ENCODE measurements at regions of chr6 and their contacts with region 1.

Region 1: GRCh38 chr6:143575440-143575839 is 63.9 kb upstream of the FUCA2 start:
- DNase-seq: peak; percentile 54 to 72 (median 68)
- H3K4me3 ChIP-seq: no peak overlapping the region
- H3K4me3 Mint-ChIP-seq: no peak overlapping the region
- H3K27ac ChIP-seq: no peak overlapping the region
- H3K27ac Mint-ChIP-seq: peak overlapping the region in 4 of 7 donors; percentile 22 to 43 (median 32)
- H3K4me1 ChIP-seq: no peaks in the 10 kb centered on the region
- H3K4me1 Mint-ChIP-seq: peaks cover 11 to 35% (median 19%) of the 10 kb centered on the region in 4 donors
- H3K27me3 ChIP-seq: no peaks in the 10 kb centered on the region
- H3K27me3 Mint-ChIP-seq: no peaks in the 10 kb centered on the region

Region 2: DNA sequence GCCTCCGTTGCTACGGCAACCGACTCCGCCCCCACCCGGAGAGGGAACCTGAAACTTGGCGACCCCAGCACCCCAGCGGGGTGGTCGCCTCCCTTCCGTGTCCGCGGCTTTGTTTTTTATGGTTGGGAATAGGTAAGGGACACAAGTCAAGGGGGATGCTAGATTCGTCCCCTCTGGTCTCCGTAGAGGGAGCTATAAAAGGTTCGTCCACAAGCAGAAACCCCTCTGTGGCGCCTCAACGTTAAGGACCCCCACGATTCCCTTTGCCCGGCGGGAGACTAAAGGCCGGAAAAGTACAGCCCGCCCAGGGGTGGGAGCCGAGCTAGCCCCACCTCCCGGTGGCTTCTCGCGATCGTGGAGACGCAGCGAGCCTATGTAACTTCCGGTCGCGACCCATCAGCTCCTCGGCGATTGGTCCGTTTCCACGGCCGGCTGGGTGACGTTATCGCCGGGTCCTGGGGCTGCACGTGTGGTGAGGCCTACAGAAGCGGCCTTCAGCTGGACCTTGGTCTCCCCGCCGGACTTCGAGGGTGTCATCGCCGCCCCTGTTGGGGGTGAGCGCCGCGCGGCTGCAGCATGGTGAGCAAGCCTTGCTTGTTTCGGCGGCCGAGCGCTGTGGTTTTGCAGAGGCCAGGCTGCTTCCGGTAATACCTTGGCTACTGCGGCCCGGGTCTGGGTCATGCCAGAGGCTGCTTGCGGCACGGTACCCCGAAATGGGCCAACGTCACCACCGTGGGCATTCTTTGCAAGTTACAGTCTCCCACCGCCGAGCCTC is 267.6 kb after region 1 on chr6 and contains the start of gene LTV1:
- CTCF ChIA-PET with region 1: interaction called, 13 read pairs
- POLR2A ChIA-PET with region 1: interaction called, 8 read pairs
- intact Hi-C with region 1: loop called (anchors 1 kb)
- DNase-seq: peak; percentile 89 to 92 (median 90)
- H3K4me3 ChIP-seq: peak within 1 kb of the TSS; percentile 54 to 90
- H3K4me3 Mint-ChIP-seq: peak within 1 kb of the TSS; percentile 93 to 97 (median 95)
- H3K27ac ChIP-seq: peak within 1 kb of the TSS; percentile 92
- H3K27ac Mint-ChIP-seq: peak within 1 kb of the TSS; percentile 96 to 99 (median 98)
- H3K4me1 ChIP-seq: peaks cover 15% of the 10 kb centered on the region
- H3K4me1 Mint-ChIP-seq: peaks cover 19 to 32% (median 25%) of the 10 kb centered on the region in 4 donors
- H3K27me3 ChIP-seq: no peaks in the 10 kb centered on the region
- H3K27me3 Mint-ChIP-seq: no peaks in the 10 kb centered on the region
- total RNA-seq, gene LTV1: 19.9 to 20.8 TPM

Region 3: GRCh38 chr6:145214570-145214969 is 1639.1 kb after region 1 on chr6:
- CTCF ChIA-PET with region 1: no interaction called
- POLR2A ChIA-PET with region 1: no interaction called
- intact Hi-C with region 1: loop called (anchors 10 kb)
- DNase-seq: peak in 4 of 5 donors; percentile 5 to 22 (median 14)
- H3K4me3 ChIP-seq: no peak overlapping the region
- H3K4me3 Mint-ChIP-seq: peak overlapping the region in 1 of 8 donors; percentile 27
- H3K27ac ChIP-seq: no peak overlapping the region
- H3K27ac Mint-ChIP-seq: no peak overlapping the region
- H3K4me1 ChIP-seq: no peaks in the 10 kb centered on the region
- H3K4me1 Mint-ChIP-seq: peaks cover 5 to 9% (median 8%) of the 10 kb centered on the region in 4 donors
- H3K27me3 ChIP-seq: no peaks in the 10 kb centered on the region
- H3K27me3 Mint-ChIP-seq: peaks cover 0 to 2% of the 10 kb centered on the region in 2 donors

Measured in CD4-positive, alpha-beta memory T cell (primary cell).